ENCODE measurements at regions of chr16 and their contacts with region 1.

Region 1: DNA sequence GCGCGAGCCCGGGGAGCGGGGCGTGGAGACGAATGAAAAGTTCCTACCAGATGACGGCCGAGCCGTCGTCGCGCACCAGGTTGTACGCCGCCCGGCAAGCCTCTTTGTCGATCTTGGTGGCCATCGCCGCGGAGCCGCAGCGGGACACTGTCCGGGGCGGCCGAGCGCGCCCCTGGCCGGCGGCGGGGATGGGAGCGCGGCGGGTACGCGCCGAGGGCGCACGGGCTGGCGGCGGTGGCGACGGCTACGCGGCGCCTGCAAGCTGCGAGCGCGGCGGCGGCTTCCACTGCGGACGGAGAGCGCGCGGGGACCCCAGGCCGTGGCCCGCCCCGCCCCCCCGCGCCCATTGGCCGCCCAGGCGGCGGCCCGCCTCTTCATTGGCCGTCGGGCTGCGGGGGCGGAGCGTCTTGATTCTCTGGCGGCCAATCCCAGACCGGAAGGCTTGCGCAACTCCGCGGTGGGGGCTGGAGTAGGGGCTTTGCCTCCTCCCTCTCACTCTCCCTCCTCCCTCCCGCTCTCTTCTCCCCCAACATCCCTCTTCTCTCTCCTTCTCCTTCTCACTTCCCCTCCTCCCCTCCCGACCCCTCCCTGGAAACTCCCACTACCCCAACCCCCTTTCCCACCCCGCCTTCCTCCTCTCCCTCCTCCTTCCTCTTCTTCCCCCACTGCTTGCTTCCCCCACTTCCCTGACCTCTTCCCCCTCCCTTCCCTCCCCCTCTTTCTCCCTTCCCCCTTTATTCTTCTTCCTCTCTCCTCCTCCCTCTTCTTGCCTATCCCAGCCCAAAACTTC is at the start of gene COTL1:
- DNase-seq: peak; percentile 98
- total RNA-seq, gene COTL1: 11.0 TPM

Region 2: GRCh38 chr16:84511180-84511824 is 106.7 kb before region 1 on chr16:
- intact Hi-C with region 1: loop called (anchors 1 kb)
- DNase-seq: peak; percentile 94